Activated CD4-positive, alpha-beta T cell treated with anti-CD3 and anti-CD28 coated beads, Interleukin-2, amount 10 ng/mL, durations not matched to agents 24 days and 14 days (primary cell): ENCODE measurements at regions of chr4 and their contacts with region 1.

Region 1: GRCh38 chr4:52861879-52862616 is at the start of gene RASL11B:
- DNase-seq: peak; percentile 96
- H3K4me3 Mint-ChIP-seq: peak within 1 kb of the TSS; percentile 85
- H3K27ac Mint-ChIP-seq: peak within 1 kb of the TSS; percentile 39
- H3K4me1 Mint-ChIP-seq: peaks cover 11% of the 10 kb centered on the region
- H3K27me3 Mint-ChIP-seq: peaks cover 42% of the 10 kb centered on the region
- total RNA-seq, gene RASL11B: 2.0 and 2.2 TPM in 2 replicates

Region 2: DNA sequence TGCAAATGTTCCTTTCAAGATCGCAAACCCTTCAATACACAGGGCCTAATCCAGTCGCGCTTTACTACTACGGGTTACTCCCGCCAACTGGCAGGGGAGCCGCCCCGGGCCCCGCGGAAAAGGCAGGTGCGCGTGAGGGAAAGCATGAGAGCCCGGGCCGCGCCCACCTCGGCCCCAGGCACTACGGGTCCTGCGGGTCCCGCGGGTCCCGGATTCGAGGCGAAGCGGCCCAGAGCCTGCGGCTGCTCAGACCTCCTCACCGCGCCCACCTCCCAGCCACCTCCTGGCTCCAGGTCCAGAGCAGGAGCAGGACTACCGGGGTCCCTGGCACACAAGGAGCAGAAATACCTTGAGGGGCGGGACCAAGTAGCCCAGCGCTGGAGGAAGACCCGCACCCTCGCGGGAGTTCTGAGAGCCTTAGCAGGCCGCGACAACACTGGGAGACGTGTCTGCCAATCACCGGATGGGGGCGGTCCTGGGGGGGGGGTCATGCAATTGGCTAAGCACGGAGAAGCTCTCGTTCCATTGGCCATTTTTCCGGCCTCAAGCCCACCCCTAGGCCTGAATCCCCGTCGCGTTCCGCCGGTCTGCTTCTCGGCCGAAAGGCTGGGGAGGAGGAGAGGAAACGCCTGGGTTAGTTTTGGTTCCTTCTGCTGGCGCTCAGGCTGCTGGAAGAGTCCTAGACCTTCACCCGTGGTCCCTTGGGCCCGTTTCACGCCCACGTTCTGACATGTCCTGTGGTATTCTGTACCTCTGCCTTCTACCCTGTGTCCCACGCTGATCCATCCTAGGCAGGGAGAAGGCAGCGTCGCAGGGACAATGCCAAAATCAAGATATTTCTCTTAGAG is 139.9 kb before region 1 on chr4:
- intact Hi-C with region 1: loop called (anchors 5 kb)
- DNase-seq: peak; percentile 95
- H3K4me3 Mint-ChIP-seq: peak overlapping the region; percentile 82
- H3K27ac Mint-ChIP-seq: peak overlapping the region; percentile 69
- H3K4me1 Mint-ChIP-seq: peaks cover 4% of the 10 kb centered on the region
- H3K27me3 Mint-ChIP-seq: peaks cover 10% of the 10 kb centered on the region

Region 3: GRCh38 chr4:52780206-52780605 is 81.8 kb before region 1 on chr4:
- intact Hi-C with region 1: no loop called
- DNase-seq: no peak
- H3K4me3 Mint-ChIP-seq: no peak overlapping the region
- H3K27ac Mint-ChIP-seq: no peak overlapping the region
- H3K4me1 Mint-ChIP-seq: no peaks in the 10 kb centered on the region
- H3K27me3 Mint-ChIP-seq: no peaks in the 10 kb centered on the region